ENCODE measurements at regions of chr7 and their contacts with region 1.

Region 1: GRCh38 chr7:10973061-10973944 is at the start of gene PHF14:
- DNase-seq: peak; percentile 96 to 98 (median 98)
- ATAC-seq: peak; percentile 100
- H3K4me3 ChIP-seq: peak within 1 kb of the TSS; percentile 65 to 99 (median 82)
- H3K27ac ChIP-seq: peak within 1 kb of the TSS in 11 of 12 donors; percentile 64 to 91 (median 85)
- H3K4me1 ChIP-seq: peaks cover 0 to 22% (median 10%) of the 10 kb centered on the region in 12 donors
- H3K27me3 ChIP-seq: peaks cover 0 to 4% (median 0%) of the 10 kb centered on the region in 9 donors
- CTCF ChIP-seq: no peak
- POLR2A ChIP-seq: peak in 1 of 2 donors; percentile 71
- total RNA-seq, gene PHF14: 10.6 to 21.4 (median 14.3) TPM

Region 2: GRCh38 chr7:10770176-10770575 is 203.1 kb before region 1 on chr7:
- intact Hi-C with region 1: no loop called
- DNase-seq: no peak
- ATAC-seq: no peak
- H3K4me3 ChIP-seq: no peak overlapping the region
- H3K27ac ChIP-seq: no peak overlapping the region
- H3K4me1 ChIP-seq: no peaks in the 10 kb centered on the region
- H3K27me3 ChIP-seq: no peaks in the 10 kb centered on the region
- CTCF ChIP-seq: no peak
- POLR2A ChIP-seq: no peak

Region 3: DNA sequence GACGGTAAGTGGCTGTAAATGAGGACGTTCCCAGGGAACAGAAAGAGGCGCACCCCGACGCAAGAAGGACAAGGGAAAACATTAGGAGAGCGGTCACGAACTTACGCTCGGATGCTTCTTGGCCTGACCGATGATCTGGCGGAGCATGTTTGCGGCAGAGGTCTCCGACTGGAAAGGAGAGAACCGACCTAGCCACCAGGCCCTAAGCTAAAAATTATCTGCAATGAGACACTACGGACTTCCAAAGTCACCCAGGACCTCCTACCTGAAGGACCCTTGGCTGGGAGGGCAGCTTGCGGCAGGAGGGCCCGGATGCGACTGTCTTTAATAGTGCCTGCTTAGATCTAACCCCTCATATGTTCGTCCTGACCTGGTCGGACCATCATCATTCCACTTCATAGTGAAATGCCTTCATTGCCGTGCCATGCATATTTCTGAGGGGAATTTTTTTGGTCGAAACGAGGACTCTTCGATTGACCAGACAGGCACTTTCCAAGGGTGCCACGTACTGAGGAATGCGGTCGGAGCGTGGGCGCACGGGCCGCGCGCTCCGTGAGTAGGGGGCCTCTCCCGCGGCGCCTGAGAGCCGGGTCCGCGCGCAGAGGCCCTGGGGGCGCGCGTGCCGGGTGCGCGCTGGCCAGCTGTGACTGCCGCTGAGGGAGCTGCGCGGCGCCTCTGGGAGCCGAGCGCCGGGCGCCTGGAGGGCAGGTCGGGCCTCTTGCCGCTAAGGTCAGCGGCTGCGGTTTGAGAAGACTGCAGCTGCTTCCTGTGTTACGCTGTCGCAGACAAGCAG is 33.2 kb before region 1 on chr7:
- intact Hi-C with region 1: loop called in 6 of 10 experiments (anchors 1 to 2 kb)
- DNase-seq: peak; percentile 90 to 94 (median 93)
- ATAC-seq: peak; percentile 98 to 99 (median 99)
- H3K4me3 ChIP-seq: peak overlapping the region; percentile 59 to 96 (median 80)
- H3K27ac ChIP-seq: peak overlapping the region; percentile 87 to 99 (median 95)
- H3K4me1 ChIP-seq: peaks cover 0 to 50% (median 34%) of the 10 kb centered on the region in 12 donors
- H3K27me3 ChIP-seq: no peaks in the 10 kb centered on the region
- CTCF ChIP-seq: no peak
- POLR2A ChIP-seq: peak in 1 of 2 donors; percentile 70

Region 4: GRCh38 chr7:11212080-11212711 is 238.9 kb after region 1 on chr7:
- intact Hi-C with region 1: loop called in 1 of 10 experiments (anchors 10 kb)
- DNase-seq: peak in 3 of 5 donors; percentile 30 to 35 (median 33)
- ATAC-seq: peak in 3 of 4 donors; percentile 64 to 77 (median 66)
- H3K4me3 ChIP-seq: no peak overlapping the region
- H3K27ac ChIP-seq: no peak overlapping the region
- H3K4me1 ChIP-seq: peaks cover 0 to 7% (median 0%) of the 10 kb centered on the region in 12 donors
- H3K27me3 ChIP-seq: no peaks in the 10 kb centered on the region
- CTCF ChIP-seq: peak; percentile 69 to 91 (median 82)
- POLR2A ChIP-seq: no peak

Measured in heart left ventricle (tissue), 16 donors.